Activated CD8-positive, alpha-beta T cell treated with anti-CD3 and anti-CD28 coated beads, Interleukin-2, amount 10 ng/mL, durations not matched to agents 7 days and 5 days (primary cell): ENCODE measurements at regions of chr20 and their contacts with region 1.

Region 1: DNA sequence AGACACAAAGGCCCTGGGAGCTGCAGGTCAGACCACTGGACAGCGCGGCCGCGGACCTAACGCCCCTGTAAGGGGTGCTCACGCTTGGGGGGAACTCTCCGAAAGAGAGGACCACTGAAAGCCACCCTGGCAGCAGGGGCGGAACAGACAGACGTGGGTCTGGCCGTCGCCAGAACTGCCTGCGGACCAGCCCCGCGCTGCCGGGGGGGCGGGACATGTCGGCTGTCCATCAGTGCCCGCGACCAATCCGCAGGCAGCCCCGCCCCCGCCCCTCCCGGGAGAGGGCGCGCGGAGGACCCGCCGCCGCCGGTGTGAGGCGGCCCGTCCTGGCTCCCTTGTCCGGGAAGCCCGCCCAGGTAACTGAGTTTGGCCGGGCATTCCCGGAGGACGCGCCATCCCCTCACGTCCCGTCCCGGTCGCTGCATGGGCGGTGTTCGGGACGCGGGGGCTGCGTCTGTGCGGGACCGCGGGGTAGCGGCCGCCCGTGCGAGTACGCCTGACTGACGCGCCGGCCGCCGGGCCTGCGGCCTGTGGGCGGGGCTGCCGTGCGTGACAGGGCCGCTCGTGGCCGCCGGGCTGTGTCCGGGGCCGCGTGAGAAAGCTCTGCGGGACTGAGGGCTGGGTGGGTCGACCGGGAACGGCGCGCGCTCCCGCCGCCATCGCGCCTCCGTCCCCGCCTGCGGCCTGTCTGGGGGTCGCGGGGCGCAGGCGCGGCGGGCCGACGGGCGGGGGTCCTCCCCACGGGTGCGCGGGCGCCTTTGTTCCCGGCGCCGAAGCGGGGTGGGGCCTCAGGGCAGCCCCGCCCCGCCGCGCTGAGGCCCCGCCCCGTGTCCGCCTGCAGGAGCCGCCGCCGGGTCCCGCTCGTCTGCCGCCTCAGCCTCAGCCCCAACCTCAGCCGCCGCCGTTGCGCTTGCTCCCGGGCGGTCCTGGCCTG is at the start of gene PLCG1:
- DNase-seq: peak; percentile 88
- ATAC-seq: peak; percentile 66
- H3K4me3 Mint-ChIP-seq: peak within 1 kb of the TSS; percentile 91
- H3K27ac Mint-ChIP-seq: peak within 1 kb of the TSS; percentile 94
- H3K4me1 Mint-ChIP-seq: peaks cover 54% of the 10 kb centered on the region
- H3K27me3 Mint-ChIP-seq: no peaks in the 10 kb centered on the region
- total RNA-seq, gene PLCG1: 395 to 406 TPM

Region 2: GRCh38 chr20:40970201-40970600 is 166.7 kb before region 1 on chr20:
- CTCF ChIA-PET with region 1: interaction called, 25 read pairs
- POLR2A ChIA-PET with region 1: no interaction called
- DNase-seq: no peak
- ATAC-seq: no peak
- H3K4me3 Mint-ChIP-seq: no peak overlapping the region
- H3K27ac Mint-ChIP-seq: no peak overlapping the region
- H3K4me1 Mint-ChIP-seq: peaks cover 22% of the 10 kb centered on the region
- H3K27me3 Mint-ChIP-seq: peaks cover 39% of the 10 kb centered on the region

Region 3: GRCh38 chr20:41064377-41064776 is 72.6 kb before region 1 on chr20:
- CTCF ChIA-PET with region 1: no interaction called
- POLR2A ChIA-PET with region 1: no interaction called
- DNase-seq: no peak
- ATAC-seq: no peak
- H3K4me3 Mint-ChIP-seq: no peak overlapping the region
- H3K27ac Mint-ChIP-seq: no peak overlapping the region
- H3K4me1 Mint-ChIP-seq: peaks cover 28% of the 10 kb centered on the region
- H3K27me3 Mint-ChIP-seq: no peaks in the 10 kb centered on the region

Region 4: GRCh38 chr20:41078329-41078728 is 58.6 kb before region 1 on chr20:
- CTCF ChIA-PET with region 1: no interaction called
- POLR2A ChIA-PET with region 1: no interaction called
- DNase-seq: peak; percentile 26
- ATAC-seq: peak; percentile 36
- H3K4me3 Mint-ChIP-seq: peak overlapping the region; percentile 36
- H3K27ac Mint-ChIP-seq: peak overlapping the region; percentile 27
- H3K4me1 Mint-ChIP-seq: peaks cover 77% of the 10 kb centered on the region
- H3K27me3 Mint-ChIP-seq: no peaks in the 10 kb centered on the region

Region 5: DNA sequence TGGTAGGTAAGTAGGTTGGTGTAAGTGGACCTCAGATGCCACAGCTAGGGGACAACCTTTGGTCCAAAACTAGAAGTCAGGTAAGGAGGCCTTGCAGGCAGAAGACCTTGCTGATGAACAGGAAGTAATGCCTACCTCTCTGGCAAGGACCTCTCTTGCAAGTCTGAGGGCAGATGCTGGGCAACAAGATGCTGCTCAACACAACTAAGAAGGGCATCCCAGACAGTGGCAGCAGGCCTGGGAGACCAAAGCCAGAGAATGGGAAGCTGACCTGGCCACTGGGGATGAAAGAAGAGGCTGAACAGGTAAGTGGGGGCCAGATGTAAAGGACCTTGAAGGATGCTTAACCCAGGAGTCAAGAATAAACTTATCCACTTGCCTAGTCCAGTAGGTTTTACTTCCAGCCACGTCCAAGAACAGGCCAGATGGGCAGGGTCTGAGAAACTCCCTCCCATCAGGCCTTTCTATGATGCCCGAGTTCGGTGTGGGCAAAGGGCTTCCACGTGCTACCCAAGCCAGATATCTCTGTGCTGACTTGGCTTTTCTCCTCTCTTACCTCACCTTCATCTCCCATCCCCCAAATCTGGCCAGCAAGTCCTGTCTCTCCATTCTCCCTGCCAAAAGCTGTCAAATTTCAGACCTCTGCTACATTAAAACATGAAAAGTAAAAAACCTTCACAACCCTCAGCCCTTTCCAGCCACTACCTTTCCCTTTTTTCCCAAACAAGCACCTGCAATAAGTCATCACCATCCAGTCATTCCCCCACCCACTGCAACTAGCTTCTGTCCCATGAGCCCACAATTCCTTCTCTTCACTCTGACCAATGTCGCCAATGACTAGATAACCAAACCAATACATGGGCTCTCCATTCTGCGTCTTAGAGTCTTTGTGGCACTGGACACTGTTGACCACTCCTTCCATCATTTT is 11.2 kb before region 1 on chr20:
- CTCF ChIA-PET with region 1: interaction called, 33 read pairs
- POLR2A ChIA-PET with region 1: interaction called, 3 read pairs
- DNase-seq: peak; percentile 19
- ATAC-seq: no peak
- H3K4me3 Mint-ChIP-seq: no peak overlapping the region
- H3K27ac Mint-ChIP-seq: peak overlapping the region; percentile 3
- H3K4me1 Mint-ChIP-seq: peaks cover 12% of the 10 kb centered on the region
- H3K27me3 Mint-ChIP-seq: no peaks in the 10 kb centered on the region

Region 6: GRCh38 chr20:41173161-41173721 is 36.3 kb after region 1 on chr20:
- CTCF ChIA-PET with region 1: interaction called, 92 read pairs
- POLR2A ChIA-PET with region 1: interaction called, 4 read pairs
- DNase-seq: peak; percentile 73
- ATAC-seq: peak; percentile 85
- H3K4me3 Mint-ChIP-seq: no peak overlapping the region
- H3K27ac Mint-ChIP-seq: peak overlapping the region; percentile 78
- H3K4me1 Mint-ChIP-seq: peaks cover 50% of the 10 kb centered on the region
- H3K27me3 Mint-ChIP-seq: no peaks in the 10 kb centered on the region

Region 7: GRCh38 chr20:41232973-41233926 is 96.3 kb after region 1 on chr20:
- CTCF ChIA-PET with region 1: interaction called, 84 read pairs
- POLR2A ChIA-PET with region 1: interaction called, 3 read pairs
- DNase-seq: no peak
- ATAC-seq: no peak
- H3K4me3 Mint-ChIP-seq: no peak overlapping the region
- H3K27ac Mint-ChIP-seq: no peak overlapping the region
- H3K4me1 Mint-ChIP-seq: peaks cover 38% of the 10 kb centered on the region
- H3K27me3 Mint-ChIP-seq: no peaks in the 10 kb centered on the region

Region 8: DNA sequence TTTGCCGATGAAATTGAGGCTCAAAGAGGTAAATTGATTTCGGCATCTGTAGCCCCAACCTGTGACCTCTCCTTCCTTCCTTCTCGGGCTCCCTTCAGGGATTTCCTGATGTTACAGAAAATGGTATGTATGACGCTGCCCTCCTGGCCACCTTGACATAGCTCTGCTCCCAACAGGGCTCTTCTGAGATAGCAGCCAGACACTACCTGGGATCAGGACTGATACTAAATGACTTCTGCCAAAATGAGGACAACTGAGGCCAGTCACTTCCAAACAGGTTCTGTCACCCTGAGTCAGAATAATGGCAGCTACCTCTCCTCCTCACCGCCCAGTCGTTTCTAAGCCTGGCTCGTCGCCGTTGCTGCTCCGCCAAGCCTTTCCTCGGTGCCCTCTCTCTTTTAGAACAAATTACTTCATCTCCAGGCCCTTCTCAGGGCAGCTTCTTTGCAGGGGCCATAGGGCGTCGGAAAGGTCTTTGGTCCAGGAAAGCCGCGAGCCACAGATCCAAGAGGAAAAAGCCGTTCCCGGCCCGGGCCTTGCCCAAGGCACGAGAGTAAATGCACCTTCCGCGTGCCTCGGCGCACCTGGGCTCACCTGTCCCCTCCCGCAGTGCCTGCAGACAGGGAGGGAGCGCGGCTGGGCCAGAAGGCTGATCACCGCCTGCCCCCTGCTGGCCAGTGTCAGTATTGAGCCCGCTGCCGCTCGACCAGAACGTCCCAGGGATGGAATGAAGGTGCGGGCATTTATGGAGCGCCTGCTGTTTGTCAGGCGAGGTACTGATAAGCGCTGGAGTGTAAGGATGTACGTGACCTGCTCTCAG is 202.8 kb after region 1 on chr20:
- CTCF ChIA-PET with region 1: interaction called, 62 read pairs
- POLR2A ChIA-PET with region 1: no interaction called
- DNase-seq: peak; percentile 87
- ATAC-seq: peak; percentile 95
- H3K4me3 Mint-ChIP-seq: peak overlapping the region; percentile 66
- H3K27ac Mint-ChIP-seq: peak overlapping the region; percentile 24
- H3K4me1 Mint-ChIP-seq: peaks cover 13% of the 10 kb centered on the region
- H3K27me3 Mint-ChIP-seq: peaks cover 8% of the 10 kb centered on the region